PC-3 (cell line): ENCODE measurements at regions of chr10 and their contacts with region 1.

Region 1: GRCh38 chr10:29757551-29758297 is 123.0 kb upstream of the SVIL start:
- DNase-seq: peak; percentile 91
- ATAC-seq: peak; percentile 92
- H3K4me3 ChIP-seq: peak overlapping the region; percentile 49; the same call in 1 of the 2 replicates
- H3K27ac ChIP-seq: peak overlapping the region; percentile 98
- H3K4me1 ChIP-seq: peaks cover 36% of the 10 kb centered on the region
- H3K27me3 ChIP-seq: no peaks in the 10 kb centered on the region
- CTCF ChIP-seq: no peak

Region 2: DNA sequence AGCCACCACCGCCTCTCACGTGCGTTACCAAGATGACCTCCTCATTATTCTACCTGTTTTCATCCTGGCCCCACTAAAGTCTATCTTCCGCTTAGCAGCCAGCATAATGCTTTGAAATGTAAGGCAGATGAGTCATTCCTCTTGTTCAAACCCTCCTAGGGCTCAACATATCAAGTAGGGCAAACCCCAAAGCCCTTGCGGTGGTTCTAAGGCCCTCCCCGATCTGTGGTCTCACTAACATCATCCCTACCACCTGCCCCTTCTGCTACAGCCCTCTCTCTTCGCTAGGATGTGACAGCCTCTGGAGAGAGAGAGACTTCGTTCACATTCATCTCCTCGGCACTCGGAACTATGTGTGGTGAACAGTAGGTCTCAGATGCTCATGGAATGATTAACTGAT is 217.7 kb before region 1 on chr10:
- CTCF ChIA-PET with region 1: no interaction called
- POLR2A ChIA-PET with region 1: no interaction called
- intact Hi-C with region 1: no loop called
- DNase-seq: no peak
- ATAC-seq: no peak
- H3K4me3 ChIP-seq: no peak overlapping the region
- H3K27ac ChIP-seq: no peak overlapping the region
- H3K4me1 ChIP-seq: peaks cover 28% of the 10 kb centered on the region
- H3K27me3 ChIP-seq: no peaks in the 10 kb centered on the region
- CTCF ChIP-seq: no peak

Region 3: DNA sequence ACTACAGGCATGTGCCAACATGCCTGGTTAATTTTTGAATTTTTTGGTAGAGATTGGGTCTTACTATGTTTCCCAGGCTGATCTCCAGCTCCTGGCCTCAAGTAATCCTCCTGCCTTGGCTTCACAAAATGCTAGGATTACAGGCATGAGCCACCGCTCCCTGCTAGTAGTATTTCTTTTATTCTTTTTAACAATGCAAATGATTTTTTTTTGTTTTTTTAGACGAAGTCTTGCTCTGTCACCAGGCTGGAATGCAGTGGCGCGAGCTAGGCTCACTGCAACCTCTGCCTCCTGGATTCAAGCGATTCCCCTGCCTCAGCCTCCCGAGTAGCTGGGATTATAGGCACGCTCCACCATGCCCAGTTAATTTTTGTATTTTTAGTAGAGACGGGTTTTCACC is 181.0 kb before region 1 on chr10:
- CTCF ChIA-PET with region 1: no interaction called
- POLR2A ChIA-PET with region 1: no interaction called
- intact Hi-C with region 1: no loop called
- DNase-seq: no peak
- ATAC-seq: no peak
- H3K4me3 ChIP-seq: no peak overlapping the region
- H3K27ac ChIP-seq: no peak overlapping the region
- H3K4me1 ChIP-seq: no peaks in the 10 kb centered on the region
- H3K27me3 ChIP-seq: no peaks in the 10 kb centered on the region
- CTCF ChIP-seq: no peak

Region 4: DNA sequence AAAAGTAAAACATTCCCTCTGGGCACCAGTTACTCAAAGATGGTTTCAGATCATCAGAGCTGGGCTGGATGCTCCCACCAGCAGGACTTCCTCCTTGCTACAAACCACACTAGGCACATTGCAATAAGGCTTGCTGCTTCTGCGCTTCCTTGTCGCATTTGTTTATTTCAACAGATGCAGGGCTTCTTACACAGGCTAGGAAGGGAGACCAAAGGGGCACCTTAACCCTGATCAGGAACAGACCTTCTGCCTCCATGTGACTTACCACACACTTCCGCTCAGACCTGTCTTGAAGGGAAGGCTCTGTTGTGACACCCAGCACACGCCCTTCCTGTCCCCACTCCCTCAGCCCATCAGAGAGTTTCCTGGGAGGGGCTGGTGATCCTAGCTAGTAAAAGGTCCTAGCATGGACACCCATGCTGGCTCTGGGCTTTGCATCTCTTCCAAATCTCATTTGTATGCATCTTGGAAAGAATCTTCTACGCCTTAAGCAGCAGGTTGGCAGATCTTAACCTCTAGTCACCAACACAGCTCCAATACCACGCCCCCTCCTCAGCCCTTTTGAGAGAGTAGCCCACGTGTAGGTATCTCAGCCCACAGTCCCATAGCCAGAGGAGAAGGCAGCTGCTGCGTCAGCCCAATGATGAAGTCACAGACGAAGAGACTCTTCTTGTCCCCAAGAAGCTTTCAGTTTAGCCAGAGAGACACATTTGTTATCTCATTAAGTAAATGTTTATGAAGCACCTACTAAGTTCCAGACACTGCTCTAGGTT is 75.9 kb before region 1 on chr10:
- CTCF ChIA-PET with region 1: no interaction called
- POLR2A ChIA-PET with region 1: interaction called, 14 read pairs
- intact Hi-C with region 1: no loop called
- DNase-seq: no peak
- ATAC-seq: 0 out of 2 replicates have a peak, but pooled peaks have one; percentile 31
- H3K4me3 ChIP-seq: no peak overlapping the region
- H3K27ac ChIP-seq: no peak overlapping the region
- H3K4me1 ChIP-seq: no peaks in the 10 kb centered on the region
- H3K27me3 ChIP-seq: no peaks in the 10 kb centered on the region
- CTCF ChIP-seq: no peak

Region 5: GRCh38 chr10:29784175-29784773 is 26.6 kb after region 1 on chr10:
- CTCF ChIA-PET with region 1: no interaction called
- POLR2A ChIA-PET with region 1: no interaction called
- intact Hi-C with region 1: loop called (anchors 1 kb)
- DNase-seq: peak; percentile 98
- ATAC-seq: peak; percentile 97
- H3K4me3 ChIP-seq: no peak overlapping the region
- H3K27ac ChIP-seq: peak overlapping the region; percentile 90
- H3K4me1 ChIP-seq: peaks cover 15% of the 10 kb centered on the region
- H3K27me3 ChIP-seq: no peaks in the 10 kb centered on the region
- CTCF ChIP-seq: no peak

Region 6: DNA sequence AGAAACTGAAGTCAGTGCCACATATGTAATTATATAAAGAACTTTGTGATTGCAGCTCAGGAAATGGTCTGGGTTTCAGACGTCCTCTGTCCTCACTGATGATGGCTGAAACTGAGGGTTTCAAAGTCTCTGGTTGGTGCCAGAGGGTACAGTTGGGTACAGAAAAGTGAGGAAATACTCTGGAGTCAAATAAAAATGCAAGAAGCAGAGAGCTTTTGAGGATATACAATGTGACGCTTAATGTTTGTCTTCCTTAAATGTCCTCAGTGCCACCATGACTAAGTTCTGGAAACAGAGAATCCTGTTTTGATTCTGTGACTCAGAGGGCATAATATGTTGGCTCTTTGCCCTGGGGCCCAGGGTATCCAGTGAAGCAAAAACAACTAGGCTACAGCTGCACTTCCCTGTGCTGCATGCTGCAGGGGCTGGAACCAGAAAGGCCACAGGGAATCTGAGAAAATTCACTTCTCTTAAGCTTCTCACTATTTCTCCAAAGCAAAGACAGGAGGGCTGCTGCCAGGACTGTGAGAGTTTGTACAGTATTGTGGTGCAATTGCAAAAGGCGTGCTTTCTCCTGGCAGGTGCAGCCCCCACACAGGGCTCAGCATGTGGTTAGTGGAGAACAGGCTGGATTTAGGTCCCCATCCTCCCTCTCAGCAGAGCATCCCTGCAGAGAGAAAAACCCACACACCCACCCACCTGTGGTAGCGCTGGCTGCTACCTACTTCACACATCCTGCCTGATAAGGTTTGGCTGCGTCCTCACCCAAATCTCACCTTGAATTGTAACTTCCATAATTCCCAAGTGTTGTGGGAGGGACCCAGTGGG is 46.5 kb after region 1 on chr10:
- CTCF ChIA-PET with region 1: no interaction called
- POLR2A ChIA-PET with region 1: no interaction called
- intact Hi-C with region 1: loop called (anchors 1 kb)
- DNase-seq: peak; percentile 97
- ATAC-seq: peak; percentile 79
- H3K4me3 ChIP-seq: peak overlapping the region; percentile 49; the same call in 1 of the 2 replicates
- H3K27ac ChIP-seq: peak overlapping the region; percentile 100
- H3K4me1 ChIP-seq: peaks cover 50% of the 10 kb centered on the region
- H3K27me3 ChIP-seq: no peaks in the 10 kb centered on the region
- CTCF ChIP-seq: no peak

Region 7: GRCh38 chr10:29828440-29828894 is 70.7 kb after region 1 on chr10:
- CTCF ChIA-PET with region 1: no interaction called
- POLR2A ChIA-PET with region 1: no interaction called
- intact Hi-C with region 1: no loop called
- DNase-seq: no peak
- ATAC-seq: no peak
- H3K4me3 ChIP-seq: no peak overlapping the region
- H3K27ac ChIP-seq: no peak overlapping the region
- H3K4me1 ChIP-seq: no peaks in the 10 kb centered on the region
- H3K27me3 ChIP-seq: no peaks in the 10 kb centered on the region
- CTCF ChIP-seq: no peak